WTC11 (cell line): ENCODE measurements at regions of chr20 and their contacts with region 1.

Region 1: GRCh38 chr20:9467995-9468394 is 46.4 kb upstream of the LAMP5 start:
- DNase-seq: peak; percentile 40
- ATAC-seq: peak; percentile 74
- H3K4me3 Mint-ChIP-seq: no peak overlapping the region
- H3K27ac Mint-ChIP-seq: no peak overlapping the region
- H3K4me1 Mint-ChIP-seq: no peaks in the 10 kb centered on the region
- H3K27me3 Mint-ChIP-seq: no peaks in the 10 kb centered on the region
- CTCF ChIP-seq: peak; percentile 66

Region 2: GRCh38 chr20:9363673-9364072 is 104.3 kb before region 1 on chr20:
- CTCF ChIA-PET with region 1: no interaction called
- POLR2A ChIA-PET with region 1: no interaction called
- DNase-seq: no peak
- ATAC-seq: no peak
- H3K4me3 Mint-ChIP-seq: no peak overlapping the region
- H3K27ac Mint-ChIP-seq: no peak overlapping the region
- H3K4me1 Mint-ChIP-seq: 0 out of 2 replicates have a peak, but pooled peaks cover 3% of the 10 kb centered on the region
- H3K27me3 Mint-ChIP-seq: no peaks in the 10 kb centered on the region
- CTCF ChIP-seq: no peak

Region 3: DNA sequence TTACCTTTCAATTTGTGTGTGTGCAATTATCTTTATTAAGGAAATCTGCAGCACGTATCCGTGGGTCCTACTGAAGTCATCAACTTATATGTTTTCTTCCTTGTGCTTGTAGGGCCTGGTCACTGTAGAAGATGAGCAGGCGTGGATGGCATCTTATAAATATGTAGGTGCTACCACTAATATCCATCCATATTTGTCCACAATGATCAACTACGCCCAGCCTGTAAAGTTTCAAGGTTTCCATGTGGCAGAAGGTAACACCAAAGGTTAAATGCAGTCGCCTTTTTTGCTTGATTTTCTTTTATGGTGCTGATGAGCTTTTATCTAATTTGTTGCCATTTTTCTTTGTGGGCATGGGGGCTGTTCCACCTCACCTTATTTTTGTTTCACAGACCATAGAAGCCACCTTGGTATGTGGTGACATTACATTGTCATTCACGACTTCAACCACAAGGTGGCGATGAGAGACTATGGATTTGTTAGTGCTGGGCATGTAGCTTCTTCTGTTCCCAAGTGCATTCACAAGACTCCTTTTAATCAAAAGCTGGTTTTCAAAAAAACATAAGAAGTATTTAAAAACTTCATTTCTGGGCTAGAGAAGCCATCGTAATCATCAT is 60.1 kb before region 1 on chr20:
- CTCF ChIA-PET with region 1: interaction called, 13 read pairs
- POLR2A ChIA-PET with region 1: no interaction called
- DNase-seq: peak; percentile 73
- ATAC-seq: peak; percentile 91
- H3K4me3 Mint-ChIP-seq: no peak overlapping the region
- H3K27ac Mint-ChIP-seq: no peak overlapping the region
- H3K4me1 Mint-ChIP-seq: no peaks in the 10 kb centered on the region
- H3K27me3 Mint-ChIP-seq: no peaks in the 10 kb centered on the region
- CTCF ChIP-seq: peak; percentile 76

Region 4: DNA sequence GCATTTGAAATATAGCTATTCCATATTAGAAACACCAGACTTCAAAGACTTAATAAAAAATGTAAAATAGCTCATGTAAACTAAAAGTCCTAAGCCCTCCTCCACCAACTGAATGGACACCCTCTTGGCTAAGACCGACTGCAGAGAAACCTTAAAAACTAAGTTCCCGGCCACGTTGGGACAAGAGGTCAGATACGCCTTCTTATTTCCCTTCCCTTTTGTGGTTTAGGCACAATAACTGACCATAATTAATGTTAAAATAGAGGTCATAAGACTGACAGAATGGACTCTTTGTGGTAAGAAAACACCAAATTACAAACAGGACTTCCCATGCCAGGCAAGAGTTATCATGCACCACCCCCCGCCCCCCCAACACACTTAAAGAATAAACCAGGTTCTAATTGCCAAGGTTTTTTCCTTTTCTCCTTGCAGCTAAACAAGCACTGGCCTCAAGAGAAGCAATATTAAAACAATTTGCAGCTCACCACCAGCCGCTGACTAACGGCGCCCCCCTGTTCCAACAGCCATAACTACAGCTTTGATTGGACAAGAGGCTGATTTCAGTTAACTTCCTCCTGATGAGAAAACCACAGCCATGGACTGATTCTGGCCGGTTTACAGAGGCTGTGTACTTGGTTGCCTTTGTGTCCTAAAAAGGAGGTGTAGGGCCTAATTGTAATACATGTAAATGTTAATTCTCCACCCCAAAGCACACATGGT is 35.7 kb after region 1 on chr20:
- CTCF ChIA-PET with region 1: interaction called, 33 read pairs
- POLR2A ChIA-PET with region 1: no interaction called
- DNase-seq: peak; percentile 44
- ATAC-seq: no peak; the same call in 1 of the 2 replicates
- H3K4me3 Mint-ChIP-seq: no peak overlapping the region
- H3K27ac Mint-ChIP-seq: no peak overlapping the region
- H3K4me1 Mint-ChIP-seq: peaks cover 26% of the 10 kb centered on the region
- H3K27me3 Mint-ChIP-seq: peaks cover 64% of the 10 kb centered on the region
- CTCF ChIP-seq: no peak

Region 5: GRCh38 chr20:9583151-9583550 is 115.2 kb after region 1 on chr20:
- CTCF ChIA-PET with region 1: no interaction called
- POLR2A ChIA-PET with region 1: no interaction called
- DNase-seq: no peak
- ATAC-seq: no peak
- H3K4me3 Mint-ChIP-seq: no peak overlapping the region
- H3K27ac Mint-ChIP-seq: no peak overlapping the region
- H3K4me1 Mint-ChIP-seq: no peaks in the 10 kb centered on the region
- H3K27me3 Mint-ChIP-seq: no peaks in the 10 kb centered on the region
- CTCF ChIP-seq: no peak

Region 6: DNA sequence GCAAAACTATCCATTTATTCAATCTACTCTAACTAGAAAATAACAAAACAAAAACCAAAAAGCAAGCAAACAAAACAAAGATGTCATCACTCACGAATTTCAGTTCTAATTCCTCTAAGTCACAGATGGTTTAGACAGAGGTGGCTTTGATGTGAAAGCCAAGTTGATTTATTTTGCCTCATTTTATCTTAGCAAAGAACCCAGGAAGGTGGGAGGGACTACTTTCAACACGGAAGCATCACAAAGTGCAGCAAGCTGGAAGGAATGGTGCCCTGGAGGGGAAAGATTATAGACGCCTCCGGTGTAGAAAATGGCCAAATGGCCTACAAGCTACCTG is 134.8 kb after region 1 on chr20:
- CTCF ChIA-PET with region 1: interaction called, 62 read pairs
- POLR2A ChIA-PET with region 1: no interaction called
- DNase-seq: no peak
- ATAC-seq: no peak
- H3K4me3 Mint-ChIP-seq: no peak overlapping the region
- H3K27ac Mint-ChIP-seq: no peak overlapping the region
- H3K4me1 Mint-ChIP-seq: no peaks in the 10 kb centered on the region
- H3K27me3 Mint-ChIP-seq: peaks cover 5% of the 10 kb centered on the region
- CTCF ChIP-seq: no peak

Region 7: GRCh38 chr20:9978397-9979004 is 510.5 kb after region 1 on chr20:
- CTCF ChIA-PET with region 1: no interaction called
- POLR2A ChIA-PET with region 1: no interaction called
- DNase-seq: no peak
- ATAC-seq: peak; percentile 84
- H3K4me3 Mint-ChIP-seq: no peak overlapping the region
- H3K27ac Mint-ChIP-seq: no peak overlapping the region
- H3K4me1 Mint-ChIP-seq: peaks cover 4% of the 10 kb centered on the region
- H3K27me3 Mint-ChIP-seq: no peaks in the 10 kb centered on the region
- CTCF ChIP-seq: peak; percentile 36; the same call in 1 of the 2 replicates